MCF 10A (cell line): ENCODE measurements at regions of chr17 and their contacts with region 1.

Region 1: GRCh38 chr17:78360371-78361224 is 721 bp upstream of the SOCS3 start:
- DNase-seq: peak; percentile 89
- H3K4me3 Mint-ChIP-seq: peak overlapping the region; percentile 73
- H3K27ac Mint-ChIP-seq: no peak overlapping the region
- H3K4me1 Mint-ChIP-seq: peaks cover 7% of the 10 kb centered on the region
- H3K27me3 Mint-ChIP-seq: no peaks in the 10 kb centered on the region
- CTCF ChIP-seq: peak; percentile 85

Region 2: GRCh38 chr17:78289802-78290363 is 70.7 kb before region 1 on chr17:
- CTCF ChIA-PET with region 1: interaction called, 5 read pairs
- POLR2A ChIA-PET with region 1: interaction called, 5 read pairs
- intact Hi-C with region 1: loop called (anchors 1 kb)
- DNase-seq: peak; percentile 85
- H3K4me3 Mint-ChIP-seq: no peak overlapping the region
- H3K27ac Mint-ChIP-seq: no peak overlapping the region
- H3K4me1 Mint-ChIP-seq: peaks cover 8% of the 10 kb centered on the region
- H3K27me3 Mint-ChIP-seq: no peaks in the 10 kb centered on the region
- CTCF ChIP-seq: peak; percentile 85

Region 3: DNA sequence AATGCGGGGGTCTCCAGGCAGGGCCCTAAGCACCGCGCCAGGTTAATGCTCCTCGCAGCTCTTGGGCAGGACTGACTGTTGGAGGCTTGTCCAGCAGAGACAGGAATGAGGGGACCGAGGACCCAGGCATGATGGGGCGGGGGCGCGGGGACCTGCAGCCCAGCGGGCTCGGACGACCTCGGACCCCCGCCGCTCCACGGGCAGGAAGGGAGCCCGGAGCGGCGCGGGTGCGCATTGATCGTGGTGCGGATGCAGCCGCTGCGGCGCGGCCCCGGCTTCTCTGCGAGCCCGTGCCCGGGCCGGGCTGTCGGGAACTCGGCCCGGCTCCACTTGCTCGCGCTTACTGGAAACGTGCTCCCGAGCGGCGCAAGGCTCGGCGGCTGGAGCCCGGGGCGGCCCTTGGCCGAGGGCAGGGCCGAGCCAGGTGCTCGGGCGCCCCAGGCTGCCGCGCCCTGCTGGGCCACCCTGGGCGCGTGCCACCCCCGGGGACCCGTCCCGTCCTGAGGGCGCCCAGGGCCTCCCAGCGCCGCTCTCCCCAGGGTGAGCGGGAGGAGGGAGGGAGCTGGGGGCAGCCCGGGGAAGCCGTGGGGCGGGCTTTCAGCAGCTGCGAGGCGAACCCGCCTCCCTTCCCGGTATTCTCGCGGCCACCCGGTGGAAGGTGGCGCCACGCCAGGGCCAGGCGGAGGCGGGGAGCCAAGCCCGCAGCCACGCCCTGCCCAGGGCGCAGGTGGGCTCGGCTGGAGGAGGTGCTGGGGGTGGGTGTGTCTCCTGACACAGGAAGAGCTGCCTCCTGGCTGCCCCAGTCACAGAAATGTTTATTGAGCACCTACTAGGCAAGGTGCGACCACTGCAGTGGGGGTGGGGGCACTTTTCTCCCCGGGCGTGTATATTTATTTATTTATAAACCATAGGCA is 46.6 kb before region 1 on chr17:
- CTCF ChIA-PET with region 1: interaction called, 4 read pairs
- POLR2A ChIA-PET with region 1: interaction called, 4 read pairs
- intact Hi-C with region 1: loop called (anchors 1 kb)
- DNase-seq: peak; percentile 92
- H3K4me3 Mint-ChIP-seq: peak overlapping the region; percentile 50
- H3K27ac Mint-ChIP-seq: peak overlapping the region; percentile 31
- H3K4me1 Mint-ChIP-seq: peaks cover 42% of the 10 kb centered on the region
- H3K27me3 Mint-ChIP-seq: peaks cover 19% of the 10 kb centered on the region
- CTCF ChIP-seq: no peak

Region 4: DNA sequence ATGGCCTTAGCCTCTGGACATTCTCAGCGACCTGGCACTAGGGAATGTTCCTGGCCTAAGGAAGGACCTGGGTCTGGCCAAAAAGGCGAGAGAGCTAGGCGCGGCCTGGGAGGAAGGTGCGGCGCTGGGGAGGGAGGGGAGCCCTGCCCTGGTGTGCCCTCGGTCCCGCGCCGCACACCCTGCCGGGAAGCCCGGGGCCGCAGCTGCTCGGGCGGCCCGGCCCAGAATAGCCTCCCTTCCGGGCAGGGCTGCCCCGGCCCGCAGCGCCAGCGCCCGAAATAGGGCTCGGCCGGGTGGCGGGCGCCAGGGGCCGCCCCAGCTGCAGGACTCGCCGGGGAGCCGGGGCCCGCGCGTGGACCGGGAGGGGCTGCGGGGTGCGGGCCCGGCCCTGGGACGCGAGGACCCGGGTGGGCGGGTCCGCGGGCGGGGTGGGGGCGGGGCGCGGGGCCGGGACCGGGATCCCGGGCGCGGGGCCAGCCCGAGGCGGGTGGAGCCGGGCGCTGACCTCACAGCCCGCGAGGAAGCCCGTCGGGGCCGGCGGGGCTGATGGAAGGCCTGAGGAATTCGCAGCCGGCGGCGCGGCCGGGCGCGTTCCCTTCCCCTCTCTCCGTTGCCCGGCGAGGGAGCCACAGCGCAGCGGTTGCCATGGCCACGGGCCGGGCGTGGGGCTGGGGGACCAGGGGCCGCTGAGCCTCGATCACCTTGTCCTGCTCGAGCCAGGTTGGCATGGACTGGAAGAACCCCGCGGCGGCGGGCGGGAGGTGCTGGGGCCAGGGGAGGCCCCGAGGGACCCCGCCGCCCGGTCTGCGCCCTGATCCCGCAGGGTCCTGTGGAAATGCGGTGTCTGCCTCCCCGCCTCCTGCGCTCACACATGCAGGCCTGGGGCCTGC is 18.8 kb before region 1 on chr17:
- CTCF ChIA-PET with region 1: interaction called, 3 read pairs
- POLR2A ChIA-PET with region 1: interaction called, 13 read pairs
- intact Hi-C with region 1: loop called (anchors 1 kb)
- DNase-seq: peak; percentile 70
- H3K4me3 Mint-ChIP-seq: peak overlapping the region; percentile 59
- H3K27ac Mint-ChIP-seq: no peak overlapping the region
- H3K4me1 Mint-ChIP-seq: peaks cover 32% of the 10 kb centered on the region
- H3K27me3 Mint-ChIP-seq: no peaks in the 10 kb centered on the region
- CTCF ChIP-seq: no peak

Region 5: GRCh38 chr17:78378225-78379130 is 17.9 kb after region 1 on chr17 and contains the start of gene PGS1:
- CTCF ChIA-PET with region 1: interaction called, 6 read pairs
- POLR2A ChIA-PET with region 1: interaction called, 35 read pairs
- intact Hi-C with region 1: no loop called
- DNase-seq: peak; percentile 69
- H3K4me3 Mint-ChIP-seq: peak within 1 kb of the TSS; percentile 85
- H3K27ac Mint-ChIP-seq: peak within 1 kb of the TSS; percentile 66
- H3K4me1 Mint-ChIP-seq: peaks cover 51% of the 10 kb centered on the region
- H3K27me3 Mint-ChIP-seq: no peaks in the 10 kb centered on the region
- CTCF ChIP-seq: no peak
- total RNA-seq, gene PGS1: 25.7 and 31.8 TPM in 2 replicates

Region 6: DNA sequence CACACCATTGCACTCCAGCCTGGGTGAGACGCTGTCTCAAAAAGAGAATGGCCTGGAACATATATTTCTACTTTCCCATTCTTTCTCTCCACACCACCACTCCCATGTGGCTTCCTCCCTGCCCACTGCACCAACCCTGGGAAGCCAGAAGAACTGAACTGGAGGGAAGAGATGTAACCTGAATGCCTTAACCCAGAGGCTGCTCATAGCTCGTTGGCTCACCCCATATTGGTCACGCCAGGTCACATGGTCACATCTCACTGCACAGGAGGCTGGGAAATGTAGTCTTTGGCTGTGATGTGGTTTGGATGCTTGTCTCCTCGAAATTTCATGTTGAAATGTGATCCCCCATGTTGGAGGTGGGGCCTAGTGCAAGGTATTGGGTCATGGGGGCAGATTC is 222.5 kb after region 1 on chr17:
- CTCF ChIA-PET with region 1: no interaction called
- POLR2A ChIA-PET with region 1: no interaction called
- intact Hi-C with region 1: no loop called
- DNase-seq: peak; percentile 18
- H3K4me3 Mint-ChIP-seq: no peak overlapping the region
- H3K27ac Mint-ChIP-seq: no peak overlapping the region
- H3K4me1 Mint-ChIP-seq: peaks cover 7% of the 10 kb centered on the region
- H3K27me3 Mint-ChIP-seq: no peaks in the 10 kb centered on the region
- CTCF ChIP-seq: no peak